Activated CD8-positive, alpha-beta T cell treated with anti-CD3 and anti-CD28 coated beads, Interleukin-2, amount 10 ng/mL, durations not matched to agents 7 days and 5 days (primary cell): ENCODE measurements at regions of chr18 and their contacts with region 1.

Region 1: DNA sequence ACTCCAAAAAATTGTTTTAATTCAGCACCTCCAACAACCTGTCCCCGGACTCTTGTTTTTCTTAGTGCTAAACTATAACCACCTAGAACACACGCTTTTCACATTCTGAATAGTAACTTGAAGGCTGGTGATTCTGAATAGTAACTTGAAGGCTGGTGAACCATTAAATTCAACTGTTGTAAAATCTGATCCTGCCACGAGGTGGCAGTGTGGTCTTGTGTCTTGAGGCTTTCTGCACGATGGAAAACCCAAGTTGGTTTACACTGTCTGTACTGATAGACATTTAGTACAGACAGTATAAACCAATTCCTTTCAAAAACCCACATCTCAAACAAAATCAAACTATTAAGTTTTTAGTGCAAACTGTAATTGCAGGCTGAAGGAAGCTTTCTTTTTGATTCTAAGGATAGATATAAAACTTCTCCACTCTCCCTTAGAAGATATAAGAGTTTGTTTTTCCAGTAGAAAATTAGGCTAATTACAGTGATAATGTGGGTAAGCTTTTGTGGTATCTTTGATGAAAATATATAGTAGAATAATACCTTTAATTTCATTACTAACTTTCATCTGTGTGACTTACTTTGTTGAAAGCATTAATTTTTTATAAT is 57.6 kb downstream of the VAPA start:
- DNase-seq: peak; percentile 81
- ATAC-seq: peak; percentile 73
- H3K4me3 Mint-ChIP-seq: no peak overlapping the region
- H3K27ac Mint-ChIP-seq: no peak overlapping the region
- H3K4me1 Mint-ChIP-seq: peaks cover 17% of the 10 kb centered on the region
- H3K27me3 Mint-ChIP-seq: peaks cover 25% of the 10 kb centered on the region

Region 2: DNA sequence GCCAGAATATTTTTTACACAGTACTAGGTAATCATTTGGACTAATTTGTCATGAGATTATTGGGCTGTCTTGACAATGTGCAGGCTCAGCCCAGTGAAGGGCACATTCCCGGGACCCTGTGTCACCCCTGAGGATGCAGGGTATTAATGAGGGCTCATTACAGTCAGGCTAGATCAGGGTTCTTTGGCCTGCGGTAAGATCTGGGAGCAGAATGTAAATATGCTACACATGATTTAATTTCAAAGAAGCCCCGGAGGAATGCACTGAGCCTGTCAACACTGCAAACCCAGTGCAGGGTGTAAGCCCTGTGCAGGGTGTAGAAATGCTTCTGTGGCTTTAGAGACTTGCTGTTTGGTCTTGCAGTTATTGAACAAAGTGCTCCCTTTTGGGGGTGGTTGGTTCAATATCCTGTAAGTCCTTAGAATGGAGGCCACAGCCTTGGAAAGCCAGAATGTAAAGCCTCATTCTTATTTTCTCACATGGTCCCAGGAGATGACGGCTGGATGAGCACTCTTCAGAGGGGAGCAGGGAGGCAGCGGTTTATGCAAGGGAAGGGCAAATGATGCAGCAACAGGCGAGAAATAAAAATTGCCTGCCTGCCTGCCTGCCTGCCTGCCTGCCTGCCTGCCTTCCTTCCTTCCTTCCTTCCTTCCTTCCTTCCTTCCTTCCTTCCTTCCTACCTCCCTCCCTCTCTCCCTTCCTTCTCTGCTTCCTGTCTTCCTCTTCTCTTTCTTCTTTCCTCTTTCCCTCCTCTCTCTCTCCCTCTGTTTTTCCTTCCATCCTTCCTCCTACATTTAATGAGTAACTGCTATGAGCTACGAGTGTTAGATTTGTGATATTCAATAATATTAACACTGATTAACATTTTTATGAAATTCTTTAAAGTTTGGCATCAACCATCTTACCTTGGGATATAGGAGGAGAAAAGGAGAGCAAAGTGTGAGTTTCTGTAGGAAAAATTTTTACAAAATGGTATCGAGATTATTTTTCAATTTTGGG is 91.2 kb after region 1 on chr18:
- CTCF ChIA-PET with region 1: no interaction called
- POLR2A ChIA-PET with region 1: no interaction called
- DNase-seq: no peak
- ATAC-seq: no peak
- H3K4me3 Mint-ChIP-seq: no peak overlapping the region
- H3K27ac Mint-ChIP-seq: no peak overlapping the region
- H3K4me1 Mint-ChIP-seq: peaks cover 9% of the 10 kb centered on the region
- H3K27me3 Mint-ChIP-seq: no peaks in the 10 kb centered on the region

Region 3: GRCh38 chr18:10519999-10520935 is 548.9 kb after region 1 on chr18:
- CTCF ChIA-PET with region 1: interaction called, 14 read pairs
- POLR2A ChIA-PET with region 1: no interaction called
- DNase-seq: peak; percentile 70
- ATAC-seq: peak; percentile 84
- H3K4me3 Mint-ChIP-seq: no peak overlapping the region
- H3K27ac Mint-ChIP-seq: no peak overlapping the region
- H3K4me1 Mint-ChIP-seq: peaks cover 21% of the 10 kb centered on the region
- H3K27me3 Mint-ChIP-seq: peaks cover 26% of the 10 kb centered on the region